ENCODE measurements at regions of chr4 and their contacts with region 1.

Region 1: DNA sequence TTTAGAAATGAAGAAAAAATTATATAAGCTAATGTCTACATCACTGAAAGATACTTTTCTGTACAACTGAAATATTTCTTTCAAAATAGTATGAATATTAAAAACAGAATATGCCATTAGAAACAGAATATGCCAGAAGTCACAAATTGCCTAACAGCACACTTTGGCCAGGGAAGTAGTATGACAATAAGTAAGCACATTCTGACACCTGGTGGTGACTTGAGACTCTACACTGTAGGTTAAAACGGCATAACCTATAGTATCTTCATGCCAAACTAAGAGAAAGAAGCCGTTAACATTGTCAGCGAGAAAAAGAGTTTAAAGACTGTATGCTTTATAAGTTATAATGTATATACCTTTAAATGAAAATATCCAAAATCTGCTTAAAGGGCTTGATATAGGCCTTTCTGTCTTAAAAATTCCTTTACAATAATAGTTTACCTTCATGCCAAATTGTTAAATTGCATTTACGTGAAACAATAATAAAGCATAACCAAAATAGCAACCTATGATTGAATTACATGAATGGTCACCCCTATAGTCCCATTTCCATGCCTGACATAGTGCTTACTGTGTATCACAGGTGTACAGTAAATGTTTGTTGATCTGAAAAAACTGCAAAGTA is 32.8 kb downstream of the FAM13A start:
- DNase-seq: peak; percentile 78
- H3K4me3 ChIP-seq: no peak overlapping the region
- H3K27ac ChIP-seq: no peak overlapping the region
- H3K4me1 ChIP-seq: no peaks in the 10 kb centered on the region
- H3K27me3 ChIP-seq: no peaks in the 10 kb centered on the region
- CTCF ChIP-seq: peak; percentile 48 to 58
- POLR2A ChIP-seq: no peak

Region 2: DNA sequence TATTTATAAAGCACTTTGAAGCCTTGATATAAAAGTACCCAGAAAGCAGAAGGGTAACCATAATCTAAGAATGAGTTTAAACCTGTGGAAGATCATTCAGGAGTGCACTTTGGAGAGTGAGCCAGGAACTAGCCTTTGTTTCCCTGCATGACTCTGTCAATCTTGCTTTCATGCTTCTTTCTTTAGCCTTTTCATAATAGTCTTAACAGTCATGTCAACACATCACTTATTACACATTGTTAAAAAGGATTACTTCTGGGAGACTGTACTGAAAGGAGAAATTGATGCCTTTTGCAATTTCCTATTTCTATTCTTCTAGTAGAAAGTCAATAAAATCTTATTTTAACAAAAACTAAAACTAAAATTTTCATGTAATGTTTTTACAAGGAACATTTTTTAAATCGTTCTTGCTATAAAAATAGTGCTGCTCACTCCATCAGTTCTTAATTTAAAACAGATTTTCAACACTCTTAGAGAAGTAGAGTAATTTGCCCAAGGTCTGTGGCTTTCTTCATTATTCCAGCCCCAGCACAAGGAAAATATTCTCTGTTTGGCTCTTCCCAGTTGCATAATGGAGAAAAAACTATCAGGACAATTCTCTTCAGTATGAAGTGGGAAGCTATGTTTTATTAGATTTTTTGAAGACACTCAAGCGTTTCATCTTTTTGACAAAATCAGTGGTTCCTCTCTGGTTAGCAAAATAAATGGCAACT is 1084.0 kb before region 1 on chr4:
- CTCF ChIA-PET with region 1: no interaction called
- POLR2A ChIA-PET with region 1: no interaction called
- dilution Hi-C with region 1: no loop called
- intact Hi-C with region 1: no loop called
- DNase-seq: no peak
- H3K4me3 ChIP-seq: no peak overlapping the region
- H3K27ac ChIP-seq: no peak overlapping the region
- H3K4me1 ChIP-seq: no peaks in the 10 kb centered on the region
- H3K27me3 ChIP-seq: peaks cover 0 to 5% of the 10 kb centered on the region in 2 experiments
- CTCF ChIP-seq: no peak
- POLR2A ChIP-seq: no peak

Region 3: DNA sequence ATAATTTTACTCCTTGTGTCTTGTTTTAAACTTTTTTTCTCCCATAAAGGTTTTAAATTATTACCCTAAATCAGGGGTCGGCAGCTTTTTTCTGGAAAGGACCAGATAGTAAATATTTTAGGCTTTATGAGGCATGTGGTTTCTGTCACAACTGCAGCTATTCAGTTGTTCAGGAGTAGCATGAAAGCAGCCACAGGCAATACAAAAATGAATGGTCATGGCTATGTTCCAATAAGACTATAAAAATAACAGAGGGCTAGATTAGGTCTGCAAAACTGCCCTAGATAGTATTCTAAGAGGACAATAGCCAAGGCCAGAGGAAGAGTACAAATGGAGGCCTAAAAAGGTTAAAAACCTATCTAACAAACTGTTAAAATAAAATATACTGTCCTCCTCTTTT is 542.6 kb before region 1 on chr4:
- CTCF ChIA-PET with region 1: no interaction called
- POLR2A ChIA-PET with region 1: no interaction called
- dilution Hi-C with region 1: no loop called
- intact Hi-C with region 1: no loop called
- DNase-seq: no peak
- H3K4me3 ChIP-seq: no peak overlapping the region
- H3K27ac ChIP-seq: no peak overlapping the region
- H3K4me1 ChIP-seq: no peaks in the 10 kb centered on the region
- H3K27me3 ChIP-seq: no peaks in the 10 kb centered on the region
- CTCF ChIP-seq: no peak
- POLR2A ChIP-seq: no peak

Region 4: GRCh38 chr4:88528861-88529260 is 495.3 kb before region 1 on chr4:
- CTCF ChIA-PET with region 1: interaction called, 42 read pairs
- POLR2A ChIA-PET with region 1: no interaction called
- dilution Hi-C with region 1: no loop called
- intact Hi-C with region 1: loop called (anchors 1 kb)
- DNase-seq: peak; percentile 25
- H3K4me3 ChIP-seq: no peak overlapping the region
- H3K27ac ChIP-seq: no peak overlapping the region
- H3K4me1 ChIP-seq: peaks cover 32% of the 10 kb centered on the region
- H3K27me3 ChIP-seq: no peaks in the 10 kb centered on the region
- CTCF ChIP-seq: no peak
- POLR2A ChIP-seq: no peak

Region 5: GRCh38 chr4:88672987-88673386 is 351.2 kb before region 1 on chr4:
- CTCF ChIA-PET with region 1: interaction called, 26 read pairs
- POLR2A ChIA-PET with region 1: no interaction called
- dilution Hi-C with region 1: no loop called
- intact Hi-C with region 1: loop called (anchors 5 kb)
- DNase-seq: peak; percentile 65
- H3K4me3 ChIP-seq: no peak overlapping the region
- H3K27ac ChIP-seq: no peak overlapping the region
- H3K4me1 ChIP-seq: no peaks in the 10 kb centered on the region
- H3K27me3 ChIP-seq: no peaks in the 10 kb centered on the region
- CTCF ChIP-seq: peak; percentile 56 to 74
- POLR2A ChIP-seq: no peak

Region 6: GRCh38 chr4:88792268-88792781 is 231.8 kb before region 1 on chr4:
- CTCF ChIA-PET with region 1: interaction called, 14 read pairs
- POLR2A ChIA-PET with region 1: no interaction called
- dilution Hi-C with region 1: no loop called
- intact Hi-C with region 1: no loop called
- DNase-seq: no peak
- H3K4me3 ChIP-seq: no peak overlapping the region
- H3K27ac ChIP-seq: no peak overlapping the region
- H3K4me1 ChIP-seq: no peaks in the 10 kb centered on the region
- H3K27me3 ChIP-seq: no peaks in the 10 kb centered on the region
- CTCF ChIP-seq: no peak
- POLR2A ChIP-seq: no peak

Region 7: GRCh38 chr4:88828842-88829571 is 195.2 kb before region 1 on chr4:
- CTCF ChIA-PET with region 1: interaction called, 18 read pairs
- POLR2A ChIA-PET with region 1: no interaction called
- dilution Hi-C with region 1: loop called (anchors 25 kb)
- intact Hi-C with region 1: no loop called
- DNase-seq: no peak
- H3K4me3 ChIP-seq: no peak overlapping the region
- H3K27ac ChIP-seq: no peak overlapping the region
- H3K4me1 ChIP-seq: peaks cover 2% of the 10 kb centered on the region
- H3K27me3 ChIP-seq: no peaks in the 10 kb centered on the region
- CTCF ChIP-seq: no peak
- POLR2A ChIP-seq: no peak

Region 8: DNA sequence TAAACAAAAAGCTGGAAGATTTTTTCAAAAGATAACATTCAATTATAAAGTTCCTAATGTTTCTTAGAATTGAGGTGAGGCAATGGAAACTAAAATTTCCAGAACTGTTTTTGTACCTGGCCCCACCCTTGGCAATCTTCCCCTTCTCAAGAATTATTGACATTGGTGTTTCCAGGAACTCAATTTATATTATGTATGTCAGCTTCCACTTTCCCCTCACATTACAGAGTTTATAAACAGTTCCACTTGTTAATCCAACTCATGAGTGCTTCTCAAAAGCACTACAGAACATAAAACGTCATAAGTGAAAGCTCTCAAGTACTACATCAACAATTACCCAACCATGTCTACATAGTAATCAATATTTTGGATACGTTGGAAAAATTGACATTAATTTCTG is 74.6 kb before region 1 on chr4:
- CTCF ChIA-PET with region 1: no interaction called
- POLR2A ChIA-PET with region 1: no interaction called
- dilution Hi-C with region 1: no loop called
- intact Hi-C with region 1: no loop called
- DNase-seq: no peak
- H3K4me3 ChIP-seq: no peak overlapping the region
- H3K27ac ChIP-seq: no peak overlapping the region
- H3K4me1 ChIP-seq: no peaks in the 10 kb centered on the region
- H3K27me3 ChIP-seq: no peaks in the 10 kb centered on the region
- CTCF ChIP-seq: no peak
- POLR2A ChIP-seq: no peak

Region 9: DNA sequence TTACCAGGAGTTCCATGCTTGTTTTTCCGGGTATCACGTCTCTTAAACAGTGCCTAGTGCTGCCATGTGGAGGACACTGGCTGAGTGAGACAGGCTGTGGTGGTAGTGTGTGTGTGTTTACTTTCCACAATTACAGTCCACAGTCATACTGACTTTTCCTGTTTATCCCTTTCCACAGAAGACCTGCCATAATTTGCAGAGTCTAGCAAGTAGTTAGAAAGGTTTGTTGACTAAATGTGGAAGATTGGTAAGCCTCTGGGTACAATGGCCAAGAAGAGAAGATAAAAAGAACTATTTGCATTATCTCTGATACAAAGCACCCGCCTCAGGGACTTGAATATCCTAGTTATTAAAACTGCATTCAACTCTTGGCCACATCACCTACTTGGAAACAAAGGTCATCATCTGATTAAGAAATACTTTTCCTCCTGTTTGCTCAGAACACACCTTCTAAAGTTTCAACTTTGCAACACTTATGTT is 56.3 kb before region 1 on chr4:
- CTCF ChIA-PET with region 1: no interaction called
- POLR2A ChIA-PET with region 1: no interaction called
- dilution Hi-C with region 1: no loop called
- intact Hi-C with region 1: no loop called
- DNase-seq: no peak
- H3K4me3 ChIP-seq: no peak overlapping the region
- H3K27ac ChIP-seq: no peak overlapping the region
- H3K4me1 ChIP-seq: no peaks in the 10 kb centered on the region
- H3K27me3 ChIP-seq: no peaks in the 10 kb centered on the region
- CTCF ChIP-seq: no peak
- POLR2A ChIP-seq: no peak

Measured in endothelial cell of umbilical vein (primary cell).